ENCODE measurements at regions of chr3 and their contacts with region 1.

Region 1: GRCh38 chr3:185439745-185440466 is 58.9 kb downstream of the TMEM41A start:
- DNase-seq: no peak
- H3K4me3 ChIP-seq: no peak overlapping the region
- H3K27ac ChIP-seq: no peak overlapping the region
- H3K4me1 ChIP-seq: no peaks in the 10 kb centered on the region
- H3K27me3 ChIP-seq: no peaks in the 10 kb centered on the region
- CTCF ChIP-seq: no peak

Region 2: DNA sequence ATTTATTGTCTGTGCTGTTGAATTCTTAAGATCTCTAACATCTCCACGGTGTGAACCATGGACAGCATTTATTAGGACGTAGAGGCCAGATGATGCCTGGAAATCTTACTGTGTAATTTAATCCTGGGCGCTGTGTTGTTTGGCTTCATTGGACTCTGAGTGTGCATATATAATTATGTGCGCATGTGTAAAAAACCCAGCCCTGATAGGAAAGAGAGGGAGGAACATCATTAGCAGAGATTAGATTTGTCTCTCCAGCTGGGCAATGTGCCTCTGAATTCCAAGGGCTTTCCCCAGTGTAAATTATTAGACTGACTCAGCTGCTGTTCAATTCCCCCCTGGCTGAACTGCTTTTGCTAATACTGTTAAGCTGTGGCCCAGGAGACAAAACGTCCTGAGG is 37.3 kb before region 1 on chr3:
- CTCF ChIA-PET with region 1: no interaction called
- POLR2A ChIA-PET with region 1: interaction called, 10 read pairs
- intact Hi-C with region 1: loop called (anchors 1 kb)
- DNase-seq: no peak
- H3K4me3 ChIP-seq: no peak overlapping the region
- H3K27ac ChIP-seq: no peak overlapping the region
- H3K4me1 ChIP-seq: no peaks in the 10 kb centered on the region
- H3K27me3 ChIP-seq: no peaks in the 10 kb centered on the region
- CTCF ChIP-seq: no peak

Region 3: DNA sequence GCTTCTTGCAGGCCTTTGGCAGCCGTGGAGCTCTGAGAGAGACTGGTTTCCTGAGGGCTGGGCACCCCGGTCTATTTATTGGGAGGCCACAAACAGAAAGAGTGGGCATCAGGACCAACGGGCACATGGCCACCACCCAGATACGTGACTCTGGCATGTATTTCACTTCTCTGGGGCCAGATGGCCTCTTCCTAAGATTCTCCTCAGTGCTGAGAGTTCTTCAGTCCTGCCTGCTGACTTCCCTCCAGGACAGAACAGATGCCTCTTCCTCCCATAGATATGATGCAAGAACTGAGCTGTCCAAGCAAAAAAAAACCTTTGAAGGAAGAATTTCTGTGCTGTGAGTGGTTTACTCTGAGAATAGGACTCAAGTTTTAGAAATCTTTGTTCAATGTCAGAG is 277.2 kb after region 1 on chr3:
- CTCF ChIA-PET with region 1: no interaction called
- POLR2A ChIA-PET with region 1: no interaction called
- intact Hi-C with region 1: no loop called
- DNase-seq: no peak
- H3K4me3 ChIP-seq: no peak overlapping the region
- H3K27ac ChIP-seq: peak overlapping the region; percentile 43
- H3K4me1 ChIP-seq: peaks cover 37% of the 10 kb centered on the region
- H3K27me3 ChIP-seq: no peaks in the 10 kb centered on the region
- CTCF ChIP-seq: no peak

Measured in PC-9 (cell line).